PC-3 (cell line): ENCODE measurements at regions of chr16 and their contacts with region 1.

Region 1: DNA sequence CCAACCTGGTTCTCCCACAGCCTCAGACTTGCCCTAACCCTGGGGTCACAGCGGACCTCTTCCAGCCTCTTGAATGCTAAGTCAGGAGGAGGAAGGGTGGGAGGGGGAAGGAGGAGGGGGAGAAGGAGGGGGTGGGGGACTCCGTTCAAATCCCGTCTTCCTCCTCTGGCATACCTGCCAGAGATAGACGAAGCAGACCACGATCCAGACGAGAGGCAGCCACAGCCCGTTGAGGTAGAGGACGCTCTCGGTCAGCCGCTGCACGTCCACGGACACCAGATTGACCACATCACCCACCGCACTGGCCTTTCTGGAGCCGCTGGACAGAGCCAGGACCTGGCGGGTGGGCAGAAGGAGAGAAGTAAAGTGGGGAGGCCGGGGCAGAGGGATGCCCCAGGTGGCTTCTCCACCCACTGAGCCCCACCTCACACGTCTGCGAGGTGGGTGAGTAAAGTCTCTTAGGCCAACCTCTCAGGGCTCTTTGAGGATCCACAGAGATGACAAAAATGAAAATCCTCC is 25.4 kb downstream of the ABCC6 start:
- DNase-seq: no peak
- ATAC-seq: no peak
- H3K4me3 ChIP-seq: no peak overlapping the region
- H3K27ac ChIP-seq: no peak overlapping the region
- H3K4me1 ChIP-seq: no peaks in the 10 kb centered on the region
- H3K27me3 ChIP-seq: no peaks in the 10 kb centered on the region
- CTCF ChIP-seq: no peak

Region 2: DNA sequence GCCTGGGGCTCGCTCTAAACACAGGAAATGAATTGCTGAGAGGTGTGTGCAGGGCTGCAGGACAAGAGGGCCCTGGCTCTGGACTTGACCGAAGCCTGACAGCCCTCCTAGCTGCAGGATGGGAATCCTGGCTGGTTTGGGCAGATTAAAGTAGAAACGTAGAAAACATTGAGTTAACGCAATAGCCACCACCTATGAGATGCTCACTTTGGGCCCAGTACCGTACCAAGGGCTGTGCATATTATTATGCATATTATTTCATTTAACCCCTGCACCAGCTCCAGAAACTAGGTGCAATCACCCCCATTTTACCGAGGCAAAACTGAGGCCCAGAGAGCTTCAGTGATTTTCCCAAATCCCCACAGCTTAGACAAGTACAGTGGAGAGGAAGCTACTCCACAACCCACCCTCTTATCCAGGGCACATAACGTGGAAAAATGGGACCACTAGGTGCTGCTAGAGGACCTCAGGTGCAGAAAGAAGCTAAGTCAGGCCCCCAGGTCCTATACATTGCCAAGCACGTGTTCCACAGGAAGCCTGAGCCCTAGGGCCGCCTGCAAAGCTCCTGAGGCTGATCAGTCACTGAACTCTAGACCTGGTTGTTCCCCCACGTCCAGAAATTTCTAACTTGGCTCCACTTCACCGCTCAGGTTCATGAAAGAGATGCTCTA is 420.2 kb before region 1 on chr16:
- CTCF ChIA-PET with region 1: no interaction called
- POLR2A ChIA-PET with region 1: no interaction called
- intact Hi-C with region 1: loop called (anchors 5 kb)
- DNase-seq: peak; percentile 66
- ATAC-seq: peak; percentile 84
- H3K4me3 ChIP-seq: no peak overlapping the region
- H3K27ac ChIP-seq: no peak overlapping the region
- H3K4me1 ChIP-seq: no peaks in the 10 kb centered on the region
- H3K27me3 ChIP-seq: no peaks in the 10 kb centered on the region
- CTCF ChIP-seq: peak; percentile 62